CD4-positive, alpha-beta T cell (primary cell): ENCODE measurements at regions of chr17 and their contacts with region 1.

Region 1: GRCh38 chr17:49788478-49789242 is at the start of gene KAT7:
- DNase-seq: peak; percentile 95 to 100 (median 97)
- ATAC-seq: peak; percentile 80
- H3K4me3 ChIP-seq: peak within 1 kb of the TSS; percentile 93
- H3K4me3 Mint-ChIP-seq: peak within 1 kb of the TSS; percentile 100
- H3K27ac ChIP-seq: peak within 1 kb of the TSS; percentile 98 to 99
- H3K27ac Mint-ChIP-seq: peak within 1 kb of the TSS; percentile 96
- H3K4me1 ChIP-seq: peaks cover 34% of the 10 kb centered on the region
- H3K4me1 Mint-ChIP-seq: peaks cover 60% of the 10 kb centered on the region
- H3K27me3 ChIP-seq: no peaks in the 10 kb centered on the region
- H3K27me3 Mint-ChIP-seq: no peaks in the 10 kb centered on the region
- CTCF ChIP-seq: no peak
- total RNA-seq, gene KAT7: 178 to 187 TPM

Region 2: DNA sequence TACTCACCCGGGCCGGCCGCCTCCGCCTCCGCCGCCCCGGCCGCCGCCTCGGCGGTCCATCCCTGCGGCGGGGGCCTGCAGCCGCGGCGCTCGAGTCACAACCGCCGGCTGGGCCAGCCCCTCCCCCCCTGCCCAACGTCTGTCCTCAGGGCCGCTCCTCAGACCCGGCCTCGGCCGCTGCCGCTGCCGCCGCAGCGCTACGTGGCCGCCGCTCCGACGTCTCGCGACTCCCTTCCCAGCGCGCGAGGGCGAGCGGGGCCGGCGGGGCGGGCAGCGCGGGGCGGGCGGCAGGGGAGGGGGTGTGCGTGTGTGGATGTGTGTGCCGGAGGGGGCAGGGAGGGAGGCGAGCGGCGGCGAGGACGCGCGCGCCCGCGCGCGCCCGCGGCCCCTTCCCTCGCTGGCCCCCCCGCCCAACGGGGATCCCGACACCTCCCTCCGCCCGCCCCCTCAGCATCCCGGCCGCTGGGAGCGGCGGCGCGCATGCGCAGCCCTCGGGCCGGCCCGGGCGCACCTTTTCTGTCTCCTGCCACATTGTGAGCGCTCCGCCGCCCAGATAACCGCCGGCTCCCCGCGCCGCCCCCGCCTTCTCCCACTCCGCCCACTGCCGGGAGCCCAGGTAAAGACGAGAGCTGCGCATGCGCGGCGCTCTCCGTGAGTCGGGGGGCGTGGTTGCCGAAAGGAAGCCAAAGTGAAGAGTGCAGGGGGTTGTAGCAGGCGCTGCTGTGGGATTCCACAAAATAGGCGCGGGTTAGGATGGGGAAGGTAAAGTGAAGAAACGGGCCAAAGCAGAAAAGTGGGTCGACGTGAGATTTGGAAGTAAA is 426.5 kb before region 1 on chr17 and contains the start of gene ZNF652:
- CTCF ChIA-PET with region 1: no interaction called
- POLR2A ChIA-PET with region 1: no interaction called
- intact Hi-C with region 1: loop called in 1 of 2 experiments (anchors 2 kb)
- DNase-seq: peak; percentile 94 to 98 (median 97)
- ATAC-seq: peak; percentile 59
- H3K4me3 ChIP-seq: peak within 1 kb of the TSS; percentile 86
- H3K4me3 Mint-ChIP-seq: peak within 1 kb of the TSS; percentile 96
- H3K27ac ChIP-seq: peak within 1 kb of the TSS; percentile 61 to 87
- H3K27ac Mint-ChIP-seq: peak within 1 kb of the TSS; percentile 97
- H3K4me1 ChIP-seq: peaks cover 38% of the 10 kb centered on the region
- H3K4me1 Mint-ChIP-seq: peaks cover 56% of the 10 kb centered on the region
- H3K27me3 ChIP-seq: no peaks in the 10 kb centered on the region
- H3K27me3 Mint-ChIP-seq: no peaks in the 10 kb centered on the region
- CTCF ChIP-seq: no peak
- total RNA-seq, gene ZNF652: 33.7 to 34.9 TPM

Region 3: GRCh38 chr17:49425004-49425286 is 363.7 kb before region 1 on chr17:
- CTCF ChIA-PET with region 1: no interaction called
- POLR2A ChIA-PET with region 1: no interaction called
- intact Hi-C with region 1: no loop called
- DNase-seq: no peak
- ATAC-seq: no peak
- H3K4me3 ChIP-seq: no peak overlapping the region
- H3K4me3 Mint-ChIP-seq: no peak overlapping the region
- H3K27ac ChIP-seq: no peak overlapping the region
- H3K27ac Mint-ChIP-seq: no peak overlapping the region
- H3K4me1 ChIP-seq: no peaks in the 10 kb centered on the region
- H3K4me1 Mint-ChIP-seq: no peaks in the 10 kb centered on the region
- H3K27me3 ChIP-seq: peaks cover 0 to 5% of the 10 kb centered on the region in 2 experiments
- H3K27me3 Mint-ChIP-seq: peaks cover 34% of the 10 kb centered on the region
- CTCF ChIP-seq: no peak

Region 4: DNA sequence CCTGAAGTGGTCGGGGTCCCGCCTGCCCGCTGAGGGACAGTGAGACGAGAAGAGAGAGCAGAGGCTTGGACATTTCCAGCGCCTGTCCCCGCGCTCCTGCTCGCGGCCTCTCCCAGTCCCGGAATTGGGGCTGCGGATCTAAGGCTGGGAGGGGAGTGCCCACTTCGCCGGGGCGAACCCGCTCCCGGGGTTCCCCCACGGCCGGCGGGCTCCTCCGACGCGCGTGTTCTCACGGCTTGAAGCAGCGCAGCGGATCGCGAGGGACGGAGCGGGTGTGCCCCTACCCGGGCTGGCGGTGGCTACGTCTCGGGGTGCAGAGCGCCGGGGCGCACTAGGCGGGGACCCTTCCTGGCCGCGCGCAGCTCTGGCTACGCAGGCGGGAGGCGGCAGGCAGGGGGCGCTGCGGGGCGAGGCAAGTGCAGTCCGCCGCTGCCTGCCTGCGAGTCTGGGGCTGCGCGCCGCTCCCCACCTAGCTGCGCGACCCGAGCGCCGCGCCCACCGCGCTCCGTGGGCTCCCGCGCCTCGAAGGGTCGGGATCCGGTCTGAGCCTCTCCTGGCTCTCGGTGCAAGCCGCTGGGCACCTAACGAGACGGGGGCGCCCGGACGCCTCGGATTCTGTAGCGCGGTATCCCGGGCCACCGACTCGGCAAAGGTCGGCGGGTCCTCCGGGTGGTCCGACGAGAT is 292.3 kb before region 1 on chr17:
- CTCF ChIA-PET with region 1: no interaction called
- POLR2A ChIA-PET with region 1: no interaction called
- intact Hi-C with region 1: loop called in 1 of 2 experiments (anchors 10 kb)
- DNase-seq: peak; percentile 72 to 91 (median 82)
- ATAC-seq: peak; percentile 87
- H3K4me3 ChIP-seq: peak overlapping the region; percentile 57
- H3K4me3 Mint-ChIP-seq: peak overlapping the region; percentile 80
- H3K27ac ChIP-seq: no peak overlapping the region
- H3K27ac Mint-ChIP-seq: no peak overlapping the region
- H3K4me1 ChIP-seq: peaks cover 36% of the 10 kb centered on the region
- H3K4me1 Mint-ChIP-seq: peaks cover 35% of the 10 kb centered on the region
- H3K27me3 ChIP-seq: peaks cover 40 to 50% of the 10 kb centered on the region in 2 experiments
- H3K27me3 Mint-ChIP-seq: peaks cover 54% of the 10 kb centered on the region
- CTCF ChIP-seq: peak; percentile 79

Region 5: GRCh38 chr17:49707608-49708514 is 80.8 kb before region 1 on chr17 and contains the start of gene SLC35B1:
- CTCF ChIA-PET with region 1: interaction called, 29 read pairs
- POLR2A ChIA-PET with region 1: interaction called, 59 read pairs
- intact Hi-C with region 1: loop called (anchors 1 kb)
- DNase-seq: peak; percentile 96 to 99 (median 98)
- ATAC-seq: peak; percentile 97
- H3K4me3 ChIP-seq: peak within 1 kb of the TSS; percentile 81
- H3K4me3 Mint-ChIP-seq: peak within 1 kb of the TSS; percentile 99
- H3K27ac ChIP-seq: peak within 1 kb of the TSS; percentile 83 to 94
- H3K27ac Mint-ChIP-seq: peak within 1 kb of the TSS; percentile 87
- H3K4me1 ChIP-seq: peaks cover 34% of the 10 kb centered on the region
- H3K4me1 Mint-ChIP-seq: peaks cover 49% of the 10 kb centered on the region
- H3K27me3 ChIP-seq: no peaks in the 10 kb centered on the region
- H3K27me3 Mint-ChIP-seq: no peaks in the 10 kb centered on the region
- CTCF ChIP-seq: peak; percentile 82
- total RNA-seq, gene SLC35B1: 44.0 to 46.8 TPM

Region 6: DNA sequence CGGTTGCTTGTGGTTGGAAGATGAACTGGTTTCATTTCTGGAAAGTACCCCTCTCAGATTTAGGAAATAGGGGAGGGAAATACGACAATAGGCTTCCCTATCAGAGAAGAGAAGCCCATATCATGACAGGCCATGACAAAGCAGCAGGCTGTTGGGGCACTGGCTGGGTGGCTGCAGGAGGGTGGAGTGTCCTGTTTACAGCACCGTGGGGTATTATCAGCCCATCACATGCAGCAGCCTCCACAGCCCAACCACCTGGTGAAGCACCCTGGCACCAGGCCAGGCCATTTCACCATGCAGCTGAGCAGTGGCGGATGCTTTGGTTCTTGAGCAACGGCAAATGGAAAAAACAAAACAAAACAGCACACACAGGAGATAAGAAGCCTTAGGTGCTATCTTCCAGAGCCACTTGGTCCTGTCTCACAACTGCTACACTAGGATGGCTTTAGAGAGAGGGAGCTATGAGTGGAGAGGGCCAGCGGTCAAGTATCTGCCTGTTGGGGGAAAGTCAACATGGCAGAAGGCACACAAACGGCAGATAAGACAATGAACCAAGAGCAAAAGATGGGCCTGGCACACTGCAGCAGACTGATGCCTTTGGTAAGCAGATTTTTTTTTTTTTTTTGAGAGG is 48.9 kb before region 1 on chr17:
- CTCF ChIA-PET with region 1: no interaction called
- POLR2A ChIA-PET with region 1: interaction called, 47 read pairs
- intact Hi-C with region 1: loop called (anchors 2 kb)
- DNase-seq: peak; percentile 91 to 99 (median 98)
- ATAC-seq: peak; percentile 95
- H3K4me3 ChIP-seq: peak overlapping the region; percentile 54
- H3K4me3 Mint-ChIP-seq: peak overlapping the region; percentile 94
- H3K27ac ChIP-seq: peak overlapping the region; percentile 88 to 94
- H3K27ac Mint-ChIP-seq: peak overlapping the region; percentile 99
- H3K4me1 ChIP-seq: peaks cover 89% of the 10 kb centered on the region
- H3K4me1 Mint-ChIP-seq: peaks cover 80% of the 10 kb centered on the region
- H3K27me3 ChIP-seq: no peaks in the 10 kb centered on the region
- H3K27me3 Mint-ChIP-seq: no peaks in the 10 kb centered on the region
- CTCF ChIP-seq: no peak

Region 7: GRCh38 chr17:49763735-49764558 is 24.7 kb before region 1 on chr17 and contains the start of gene FAM117A:
- CTCF ChIA-PET with region 1: no interaction called
- POLR2A ChIA-PET with region 1: interaction called, 94 read pairs
- intact Hi-C with region 1: loop called (anchors 1 kb)
- DNase-seq: peak; percentile 91 to 99 (median 94)
- ATAC-seq: peak; percentile 87
- H3K4me3 ChIP-seq: peak within 1 kb of the TSS; percentile 86
- H3K4me3 Mint-ChIP-seq: peak within 1 kb of the TSS; percentile 95
- H3K27ac ChIP-seq: peak within 1 kb of the TSS; percentile 31 to 67
- H3K27ac Mint-ChIP-seq: peak within 1 kb of the TSS; percentile 76
- H3K4me1 ChIP-seq: peaks cover 43% of the 10 kb centered on the region
- H3K4me1 Mint-ChIP-seq: peaks cover 54% of the 10 kb centered on the region
- H3K27me3 ChIP-seq: no peaks in the 10 kb centered on the region
- H3K27me3 Mint-ChIP-seq: no peaks in the 10 kb centered on the region
- CTCF ChIP-seq: no peak
- total RNA-seq, gene FAM117A: 23.2 to 26.5 TPM

Region 8: DNA sequence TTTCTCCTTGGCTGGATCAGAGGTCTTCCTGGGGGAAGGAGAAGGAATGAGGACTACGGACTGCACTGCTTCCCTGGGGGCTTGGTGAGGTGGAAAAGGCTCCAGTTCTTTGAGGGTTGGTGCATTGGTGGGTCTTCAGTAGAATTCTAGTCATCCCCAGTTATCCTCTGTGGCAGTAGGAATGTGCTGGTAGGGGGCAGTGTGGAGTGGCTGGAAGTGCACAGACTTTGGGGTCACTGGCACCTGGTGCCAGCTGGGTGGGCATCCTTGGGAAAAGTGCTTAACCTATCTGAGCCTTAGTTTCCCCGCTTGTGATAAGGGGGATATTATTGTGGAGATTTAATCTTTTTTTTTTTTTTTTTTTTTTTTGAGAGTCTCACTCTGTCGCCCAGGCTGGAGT is 52.9 kb after region 1 on chr17:
- CTCF ChIA-PET with region 1: no interaction called
- POLR2A ChIA-PET with region 1: no interaction called
- intact Hi-C with region 1: no loop called
- DNase-seq: no peak
- ATAC-seq: no peak
- H3K4me3 ChIP-seq: no peak overlapping the region
- H3K4me3 Mint-ChIP-seq: no peak overlapping the region
- H3K27ac ChIP-seq: no peak overlapping the region
- H3K27ac Mint-ChIP-seq: no peak overlapping the region
- H3K4me1 ChIP-seq: peaks cover 12% of the 10 kb centered on the region
- H3K4me1 Mint-ChIP-seq: peaks cover 15% of the 10 kb centered on the region
- H3K27me3 ChIP-seq: no peaks in the 10 kb centered on the region
- H3K27me3 Mint-ChIP-seq: no peaks in the 10 kb centered on the region
- CTCF ChIP-seq: no peak

Region 9: GRCh38 chr17:50094753-50095619 is 306.3 kb after region 1 on chr17 and contains the start of gene PDK2:
- CTCF ChIA-PET with region 1: no interaction called
- POLR2A ChIA-PET with region 1: no interaction called
- intact Hi-C with region 1: loop called in 1 of 2 experiments (anchors 5 kb)
- DNase-seq: peak; percentile 90 to 98 (median 96)
- ATAC-seq: peak; percentile 93
- H3K4me3 ChIP-seq: peak within 1 kb of the TSS; percentile 92
- H3K4me3 Mint-ChIP-seq: peak within 1 kb of the TSS; percentile 96
- H3K27ac ChIP-seq: peak within 1 kb of the TSS; percentile 71 to 83
- H3K27ac Mint-ChIP-seq: peak within 1 kb of the TSS; percentile 88
- H3K4me1 ChIP-seq: peaks cover 25% of the 10 kb centered on the region
- H3K4me1 Mint-ChIP-seq: peaks cover 34% of the 10 kb centered on the region
- H3K27me3 ChIP-seq: no peaks in the 10 kb centered on the region
- H3K27me3 Mint-ChIP-seq: no peaks in the 10 kb centered on the region
- CTCF ChIP-seq: no peak
- total RNA-seq, gene PDK2: 8.7 to 10.1 TPM

Region 10: GRCh38 chr17:50514946-50515702 is 726.5 kb after region 1 on chr17:
- CTCF ChIA-PET with region 1: no interaction called
- POLR2A ChIA-PET with region 1: no interaction called
- intact Hi-C with region 1: no loop called
- DNase-seq: no peak
- ATAC-seq: no peak
- H3K4me3 ChIP-seq: no peak overlapping the region
- H3K4me3 Mint-ChIP-seq: no peak overlapping the region
- H3K27ac ChIP-seq: no peak overlapping the region
- H3K27ac Mint-ChIP-seq: no peak overlapping the region
- H3K4me1 ChIP-seq: peaks cover 23% of the 10 kb centered on the region
- H3K4me1 Mint-ChIP-seq: peaks cover 20% of the 10 kb centered on the region
- H3K27me3 ChIP-seq: no peaks in the 10 kb centered on the region
- H3K27me3 Mint-ChIP-seq: peaks cover 5% of the 10 kb centered on the region
- CTCF ChIP-seq: no peak